Right ventricle myocardium superior (tissue), 1 donor: ENCODE measurements at regions of chr7 and their contacts with region 1.

Region 1: GRCh38 chr7:113918946-113919345 is at the start of gene PPP1R3A:
- DNase-seq: no peak
- ATAC-seq: peak; percentile 95
- total RNA-seq, gene PPP1R3A: 116 TPM

Region 2: DNA sequence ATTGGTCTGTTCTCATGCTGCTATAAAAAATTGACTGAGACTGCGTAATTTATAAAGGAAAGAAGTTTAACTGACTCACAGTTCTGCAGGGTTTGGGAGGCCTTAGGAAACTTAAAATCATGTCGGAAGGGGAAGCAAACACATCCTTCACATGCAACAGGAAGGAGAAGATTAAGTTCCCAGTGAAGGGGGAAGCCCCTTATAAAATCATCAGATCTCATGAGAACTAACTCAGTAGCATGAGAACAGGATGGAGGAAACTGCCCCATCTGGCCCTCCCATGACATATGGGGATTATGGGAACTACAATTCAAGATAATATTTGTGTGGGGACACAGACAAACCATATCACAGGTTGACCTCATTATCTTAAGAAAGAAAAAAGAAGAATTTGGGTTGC is 134.6 kb before region 1 on chr7:
- intact Hi-C with region 1: no loop called
- DNase-seq: no peak
- ATAC-seq: no peak

Region 3: DNA sequence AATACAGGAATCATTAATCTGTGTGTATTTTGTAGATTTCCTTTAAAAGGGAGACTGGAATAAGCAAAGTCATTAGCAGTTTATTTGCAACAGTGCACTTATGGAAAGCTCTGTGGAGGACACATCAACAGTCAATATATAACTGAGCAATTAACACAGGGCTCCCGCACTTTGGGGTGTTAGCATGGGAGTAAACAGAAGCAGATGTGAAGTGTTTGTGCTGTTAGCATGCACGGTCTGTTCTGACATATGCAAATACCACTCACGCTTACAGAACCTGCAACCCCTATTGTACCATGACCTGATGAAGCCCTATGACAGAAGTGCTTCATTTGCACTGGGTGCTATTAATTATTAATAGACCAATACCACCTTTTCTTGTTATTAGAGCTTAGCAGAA is 119.0 kb before region 1 on chr7:
- intact Hi-C with region 1: loop called (anchors 10 kb)
- DNase-seq: no peak
- ATAC-seq: no peak

Region 4: GRCh38 chr7:113873554-113874151 is 45.3 kb before region 1 on chr7:
- intact Hi-C with region 1: no loop called
- DNase-seq: no peak
- ATAC-seq: peak; percentile 25